Activated CD8-positive, alpha-beta T cell treated with anti-CD3 and anti-CD28 coated beads for 36 hours (primary cell): ENCODE measurements at regions of chr2 and their contacts with region 1.

Region 1: GRCh38 chr2:238263204-238264071 is 23.6 kb upstream of the HES6 start:
- DNase-seq: peak; percentile 89
- ATAC-seq: peak; percentile 84
- H3K4me3 Mint-ChIP-seq: no peak overlapping the region
- H3K27ac Mint-ChIP-seq: no peak overlapping the region
- H3K4me1 Mint-ChIP-seq: no peaks in the 10 kb centered on the region
- H3K27me3 Mint-ChIP-seq: no peaks in the 10 kb centered on the region
- CTCF ChIP-seq: peak; percentile 79

Region 2: GRCh38 chr2:237923481-237924163 is 339.8 kb before region 1 on chr2:
- CTCF ChIA-PET with region 1: interaction called, 12 read pairs
- POLR2A ChIA-PET with region 1: no interaction called
- intact Hi-C with region 1: no loop called
- DNase-seq: peak; percentile 85
- ATAC-seq: peak; percentile 100
- H3K4me3 Mint-ChIP-seq: peak overlapping the region; percentile 44
- H3K27ac Mint-ChIP-seq: peak overlapping the region; percentile 69
- H3K4me1 Mint-ChIP-seq: peaks cover 27% of the 10 kb centered on the region
- H3K27me3 Mint-ChIP-seq: peaks cover 6% of the 10 kb centered on the region
- CTCF ChIP-seq: peak; percentile 98

Region 3: GRCh38 chr2:238202326-238203093 is 60.9 kb before region 1 on chr2:
- CTCF ChIA-PET with region 1: interaction called, 13 read pairs
- POLR2A ChIA-PET with region 1: no interaction called
- intact Hi-C with region 1: no loop called
- DNase-seq: peak; percentile 46
- ATAC-seq: no peak
- H3K4me3 Mint-ChIP-seq: peak overlapping the region; percentile 84
- H3K27ac Mint-ChIP-seq: peak overlapping the region; percentile 86
- H3K4me1 Mint-ChIP-seq: peaks cover 41% of the 10 kb centered on the region
- H3K27me3 Mint-ChIP-seq: no peaks in the 10 kb centered on the region
- CTCF ChIP-seq: no peak

Region 4: DNA sequence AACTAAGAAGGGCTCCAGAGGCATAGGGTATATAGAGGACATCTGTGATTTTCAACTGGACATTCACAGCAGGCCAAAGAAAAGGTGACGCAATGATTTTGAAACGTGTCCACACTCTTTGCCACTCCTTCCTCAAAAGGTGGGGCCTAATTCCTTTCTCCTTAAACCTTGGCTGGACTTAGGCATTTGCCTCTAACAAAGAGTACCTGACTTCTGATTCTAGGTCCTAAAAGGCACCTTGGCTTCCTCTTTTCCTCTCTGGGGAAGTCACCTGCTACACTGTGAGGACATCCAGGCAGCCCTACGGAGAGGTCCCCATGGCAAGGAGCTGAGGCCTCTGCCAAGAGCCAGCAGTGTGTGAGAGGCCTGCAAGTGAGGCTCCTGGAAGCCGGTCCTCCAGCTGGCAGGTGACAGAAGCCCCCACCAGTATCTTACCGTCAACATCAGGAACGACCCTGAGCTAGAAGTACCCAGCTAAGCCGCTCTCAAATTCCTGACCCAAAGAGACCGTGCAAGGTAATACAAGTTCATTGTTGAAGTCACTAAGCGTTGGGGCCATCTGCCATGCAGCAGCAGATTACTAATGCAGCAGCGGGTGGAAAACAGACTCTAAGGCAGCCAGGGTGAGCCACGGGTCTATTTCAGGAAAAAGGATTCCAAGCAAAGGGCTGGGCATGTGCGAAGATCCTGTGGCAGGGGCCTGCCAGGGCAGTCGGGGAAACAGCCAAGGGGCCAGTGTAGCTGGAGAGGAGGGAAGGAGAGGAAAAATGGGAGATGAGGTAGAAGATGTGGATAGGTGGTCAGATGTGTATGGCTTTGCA is 16.2 kb before region 1 on chr2:
- CTCF ChIA-PET with region 1: interaction called, 16 read pairs
- POLR2A ChIA-PET with region 1: no interaction called
- intact Hi-C with region 1: no loop called
- DNase-seq: no peak
- ATAC-seq: no peak
- H3K4me3 Mint-ChIP-seq: no peak overlapping the region
- H3K27ac Mint-ChIP-seq: no peak overlapping the region
- H3K4me1 Mint-ChIP-seq: no peaks in the 10 kb centered on the region
- H3K27me3 Mint-ChIP-seq: no peaks in the 10 kb centered on the region
- CTCF ChIP-seq: no peak

Region 5: GRCh38 chr2:238277695-238278094 is 14.3 kb after region 1 on chr2:
- CTCF ChIA-PET with region 1: interaction called, 55 read pairs
- POLR2A ChIA-PET with region 1: no interaction called
- intact Hi-C with region 1: no loop called
- DNase-seq: no peak
- ATAC-seq: no peak
- H3K4me3 Mint-ChIP-seq: no peak overlapping the region
- H3K27ac Mint-ChIP-seq: no peak overlapping the region
- H3K4me1 Mint-ChIP-seq: peaks cover 9% of the 10 kb centered on the region
- H3K27me3 Mint-ChIP-seq: no peaks in the 10 kb centered on the region
- CTCF ChIP-seq: no peak

Region 6: DNA sequence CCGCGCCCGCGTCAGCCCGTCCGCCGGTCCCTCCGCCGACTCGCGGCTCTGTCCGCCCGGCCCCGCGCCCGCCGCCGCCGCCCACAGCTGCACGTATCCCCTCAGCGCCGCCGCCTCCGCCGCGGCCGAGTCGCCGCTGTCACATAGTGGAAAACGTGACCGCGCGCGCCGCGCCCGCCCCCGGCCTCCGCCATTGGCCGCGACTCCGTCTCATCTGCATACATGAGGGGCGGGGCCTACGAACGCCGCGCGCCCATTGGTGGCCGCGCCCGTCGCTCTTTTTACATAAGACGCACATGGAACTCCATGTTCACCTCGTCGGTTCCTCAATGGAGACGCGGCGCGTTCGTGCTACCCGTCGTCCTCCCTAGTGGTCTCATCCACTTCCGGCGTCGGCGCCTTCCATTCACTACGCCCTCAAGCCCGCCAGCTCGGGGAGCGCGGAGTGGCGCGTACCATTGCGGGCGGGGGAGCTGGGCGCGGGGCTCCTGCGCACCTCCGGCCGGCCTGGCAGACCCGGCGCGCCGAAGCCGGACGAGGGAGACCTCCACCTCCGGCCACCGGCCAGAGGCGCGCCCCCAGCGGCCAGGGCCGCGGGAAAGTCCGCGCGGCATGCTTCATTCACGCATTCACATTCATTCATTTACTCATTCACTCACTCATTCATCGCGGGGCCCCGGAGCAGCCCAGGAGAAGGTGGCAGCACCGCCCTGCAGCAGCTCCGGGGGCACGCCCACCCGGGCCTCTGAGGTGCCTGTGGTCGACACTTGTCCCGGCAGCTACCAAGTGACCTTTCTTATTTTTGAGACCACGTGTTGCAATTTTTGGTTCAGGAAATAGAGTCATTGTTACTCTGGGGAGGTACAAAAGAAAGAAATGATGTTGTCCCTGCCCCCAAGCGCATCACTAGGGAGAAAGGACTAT is 25.5 kb after region 1 on chr2:
- CTCF ChIA-PET with region 1: interaction called, 29 read pairs
- POLR2A ChIA-PET with region 1: interaction called, 3 read pairs
- intact Hi-C with region 1: no loop called
- DNase-seq: peak; percentile 99
- ATAC-seq: peak; percentile 86
- H3K4me3 Mint-ChIP-seq: peak overlapping the region; percentile 83
- H3K27ac Mint-ChIP-seq: peak overlapping the region; percentile 96
- H3K4me1 Mint-ChIP-seq: peaks cover 40% of the 10 kb centered on the region
- H3K27me3 Mint-ChIP-seq: no peaks in the 10 kb centered on the region
- CTCF ChIP-seq: no peak

Region 7: DNA sequence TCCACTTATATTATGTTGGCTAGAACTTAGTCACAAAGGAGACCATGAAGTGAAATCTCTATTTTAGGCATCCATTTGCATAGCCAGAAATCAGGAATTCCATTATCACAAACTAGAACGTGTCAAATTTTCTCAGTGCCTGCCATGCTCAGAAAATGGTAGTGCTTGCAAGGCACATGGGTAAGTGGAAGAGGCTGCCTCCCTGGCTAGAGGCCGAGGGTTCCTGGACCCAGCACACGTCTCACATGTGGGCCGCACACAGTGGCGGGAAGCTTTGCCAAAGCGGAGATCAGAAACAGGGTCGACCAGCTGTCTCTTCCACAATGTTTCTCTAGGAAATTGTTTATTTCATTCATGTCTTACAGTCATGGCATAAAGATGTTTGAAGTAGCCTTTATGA is 99.2 kb after region 1 on chr2:
- CTCF ChIA-PET with region 1: no interaction called
- POLR2A ChIA-PET with region 1: no interaction called
- intact Hi-C with region 1: no loop called
- DNase-seq: no peak
- ATAC-seq: no peak
- H3K4me3 Mint-ChIP-seq: no peak overlapping the region
- H3K27ac Mint-ChIP-seq: no peak overlapping the region
- H3K4me1 Mint-ChIP-seq: no peaks in the 10 kb centered on the region
- H3K27me3 Mint-ChIP-seq: no peaks in the 10 kb centered on the region
- CTCF ChIP-seq: no peak